CD8-positive, alpha-beta T cell (primary cell): ENCODE measurements at regions of chr12 and their contacts with region 1.

Region 1: GRCh38 chr12:6620137-6620884 is 13.1 kb upstream of the CHD4 start:
- DNase-seq: peak in 7 of 9 experiments; percentile 21 to 78 (median 59)
- ATAC-seq: peak; percentile 72
- H3K4me3 ChIP-seq: peak overlapping the region; percentile 15 to 35
- H3K4me3 Mint-ChIP-seq: peak overlapping the region; percentile 73
- H3K27ac ChIP-seq: no peak overlapping the region
- H3K27ac Mint-ChIP-seq: peak overlapping the region; percentile 92
- H3K4me1 ChIP-seq: peaks cover 11% of the 10 kb centered on the region
- H3K4me1 Mint-ChIP-seq: peaks cover 39% of the 10 kb centered on the region
- H3K27me3 ChIP-seq: no peaks in the 10 kb centered on the region
- H3K27me3 Mint-ChIP-seq: no peaks in the 10 kb centered on the region
- CTCF ChIP-seq: peak; percentile 69

Region 2: GRCh38 chr12:6528887-6529235 is 91.5 kb before region 1 on chr12:
- CTCF ChIA-PET with region 1: no interaction called
- POLR2A ChIA-PET with region 1: no interaction called
- intact Hi-C with region 1: no loop called
- DNase-seq: no peak
- ATAC-seq: no peak
- H3K4me3 ChIP-seq: no peak overlapping the region
- H3K4me3 Mint-ChIP-seq: no peak overlapping the region
- H3K27ac ChIP-seq: no peak overlapping the region
- H3K27ac Mint-ChIP-seq: peak overlapping the region; percentile 27
- H3K4me1 ChIP-seq: peaks cover 19% of the 10 kb centered on the region
- H3K4me1 Mint-ChIP-seq: peaks cover 20% of the 10 kb centered on the region
- H3K27me3 ChIP-seq: no peaks in the 10 kb centered on the region
- H3K27me3 Mint-ChIP-seq: no peaks in the 10 kb centered on the region
- CTCF ChIP-seq: no peak

Region 3: GRCh38 chr12:6632026-6632983 is 12.0 kb after region 1 on chr12:
- CTCF ChIA-PET with region 1: interaction called, 28 read pairs
- POLR2A ChIA-PET with region 1: interaction called, 5 read pairs
- intact Hi-C with region 1: loop called in 1 of 2 experiments (anchors 1 kb)
- DNase-seq: peak in 8 of 9 experiments; percentile 46 to 83 (median 66)
- ATAC-seq: peak; percentile 57
- H3K4me3 ChIP-seq: peak overlapping the region; percentile 58 to 68
- H3K4me3 Mint-ChIP-seq: peak overlapping the region; percentile 83
- H3K27ac ChIP-seq: peak overlapping the region; percentile 60 to 87
- H3K27ac Mint-ChIP-seq: peak overlapping the region; percentile 98
- H3K4me1 ChIP-seq: peaks cover 70% of the 10 kb centered on the region
- H3K4me1 Mint-ChIP-seq: peaks cover 66% of the 10 kb centered on the region
- H3K27me3 ChIP-seq: no peaks in the 10 kb centered on the region
- H3K27me3 Mint-ChIP-seq: no peaks in the 10 kb centered on the region
- CTCF ChIP-seq: no peak

Region 4: DNA sequence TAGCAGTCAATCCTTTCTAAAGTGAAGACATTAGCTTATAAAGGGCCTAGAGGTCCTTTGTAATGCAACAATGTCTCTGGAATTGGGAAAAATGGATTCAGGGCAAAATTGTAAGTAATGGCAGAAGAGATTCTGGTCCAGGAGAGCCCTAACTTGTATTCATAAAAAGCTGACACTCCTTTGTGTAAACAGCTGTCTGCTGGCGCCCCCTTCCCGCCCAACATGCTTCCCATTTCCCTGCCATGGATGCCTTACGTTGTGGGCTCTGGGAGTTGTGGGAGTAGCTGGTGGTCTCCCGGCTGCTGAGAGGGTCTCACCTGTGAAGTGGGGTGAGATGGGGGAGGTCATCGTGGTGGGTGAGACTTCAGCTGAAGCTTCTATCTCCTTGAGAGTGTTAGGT is 24.6 kb after region 1 on chr12:
- CTCF ChIA-PET with region 1: interaction called, 18 read pairs
- POLR2A ChIA-PET with region 1: interaction called, 3 read pairs
- intact Hi-C with region 1: loop called in 1 of 2 experiments (anchors 1 kb)
- DNase-seq: peak in 2 of 9 experiments; percentile 32 to 43
- ATAC-seq: no peak
- H3K4me3 ChIP-seq: no peak overlapping the region
- H3K4me3 Mint-ChIP-seq: no peak overlapping the region
- H3K27ac ChIP-seq: no peak overlapping the region
- H3K27ac Mint-ChIP-seq: no peak overlapping the region
- H3K4me1 ChIP-seq: peaks cover 5% of the 10 kb centered on the region
- H3K4me1 Mint-ChIP-seq: peaks cover 13% of the 10 kb centered on the region
- H3K27me3 ChIP-seq: no peaks in the 10 kb centered on the region
- H3K27me3 Mint-ChIP-seq: no peaks in the 10 kb centered on the region
- CTCF ChIP-seq: no peak